Activated T-helper 1 cell treated with anti-CD3 and anti-CD28 coated beads, Interleukin-12 subunit alpha, Interleukin-12 subunit beta, Interleukin-2, Interleukin-4 antibody, amounts not matched to agents 30 ng/mL and 10 ng/mL and 1 ng/mL, durations not matched to agents 14 hours and 24 hours and 36 hours (primary cell): ENCODE measurements at regions of chr2 and their contacts with region 1.

Region 1: DNA sequence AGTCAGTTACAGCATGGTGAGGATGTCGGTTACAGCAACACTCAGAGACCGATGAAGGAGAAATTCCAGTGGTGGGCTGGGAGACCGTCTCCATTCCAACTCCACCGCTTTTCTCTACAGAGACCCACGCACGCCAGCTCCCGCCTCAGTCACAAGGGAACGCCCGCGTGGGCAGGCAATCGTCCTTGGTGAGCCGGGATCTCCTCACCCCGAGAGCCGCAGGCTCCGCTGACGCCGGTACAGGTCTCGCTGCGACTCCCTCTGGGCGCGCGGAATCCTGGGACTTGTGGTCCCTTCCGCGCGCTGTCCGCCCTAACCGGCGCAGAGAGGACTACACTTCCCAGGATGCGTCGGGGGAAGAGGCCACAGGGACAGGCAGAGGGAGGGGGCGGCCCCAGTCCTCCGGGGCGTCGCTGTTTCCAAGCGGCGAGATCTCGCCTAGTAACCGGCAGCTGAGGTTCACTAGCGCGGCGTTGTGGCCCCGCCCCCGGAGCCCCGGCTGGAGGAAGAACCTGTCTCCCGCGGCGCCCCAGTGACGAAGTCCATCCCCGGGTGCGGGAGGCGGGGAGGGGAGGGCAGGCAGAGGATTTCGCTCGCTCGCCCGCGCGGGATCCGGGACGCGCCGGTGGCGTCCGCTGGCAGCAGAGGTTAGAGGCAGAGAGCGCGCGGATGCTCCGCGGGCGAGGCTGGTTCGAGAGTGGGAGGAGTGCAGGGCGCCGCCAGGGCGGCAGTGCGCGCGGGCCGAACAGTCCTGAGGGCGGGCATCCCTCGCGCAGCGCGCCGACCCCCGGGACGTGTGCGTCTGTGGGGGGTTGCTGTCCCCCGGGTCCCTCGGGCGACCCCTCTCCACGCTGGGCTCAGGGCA is at the start of gene EML6:
- DNase-seq: peak; percentile 99
- H3K4me3 Mint-ChIP-seq: peak within 1 kb of the TSS; percentile 87
- H3K27ac Mint-ChIP-seq: peak within 1 kb of the TSS; percentile 49
- H3K4me1 Mint-ChIP-seq: peaks cover 14% of the 10 kb centered on the region
- H3K27me3 Mint-ChIP-seq: peaks cover 71% of the 10 kb centered on the region
- total RNA-seq, gene EML6: 0.37 and 0.44 TPM in 2 replicates

Region 2: DNA sequence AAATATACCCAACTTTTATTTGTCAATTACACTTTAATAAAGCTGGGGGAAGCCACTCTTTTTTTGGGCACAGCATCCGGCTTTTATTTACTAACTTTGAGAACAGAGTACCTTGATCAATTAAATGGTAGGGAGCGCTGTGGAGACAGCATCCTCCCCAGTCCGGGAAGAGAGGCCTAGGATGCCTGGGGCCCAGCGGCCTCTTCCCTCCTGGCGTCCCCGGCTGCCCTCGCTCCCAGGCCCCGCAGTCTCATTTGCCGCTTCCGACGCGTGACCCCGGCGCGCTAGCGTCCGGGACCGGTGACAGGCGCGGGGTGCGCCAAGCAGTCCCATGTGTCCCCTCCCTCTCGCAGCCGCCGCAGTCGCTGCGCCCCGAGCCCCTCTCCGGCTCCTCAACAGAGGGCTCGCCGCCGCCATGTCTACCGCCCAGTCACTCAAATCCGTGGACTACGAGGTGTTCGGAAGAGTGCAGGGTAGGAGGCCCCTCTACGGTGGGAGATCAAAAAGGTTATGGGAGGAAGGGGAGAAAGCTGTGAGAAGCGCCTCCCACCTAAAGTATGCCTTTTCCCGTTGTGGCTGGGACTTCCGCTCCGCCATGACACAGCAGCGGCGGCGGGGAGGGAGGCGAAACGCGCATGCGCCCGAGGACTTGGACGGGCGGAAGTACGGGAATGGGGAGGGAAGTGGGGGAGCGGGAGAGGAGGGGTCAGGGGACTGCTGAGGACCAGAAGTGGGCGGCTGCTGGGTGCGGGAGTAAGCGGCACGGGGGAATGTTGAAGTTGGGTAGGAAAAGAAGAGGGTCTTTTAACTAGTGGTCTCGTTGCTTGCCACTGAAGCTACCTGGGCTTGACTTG is 607.9 kb before region 1 on chr2 and contains the start of gene ACYP2:
- intact Hi-C with region 1: loop called (anchors 1 kb)
- DNase-seq: peak; percentile 88
- H3K4me3 Mint-ChIP-seq: peak within 1 kb of the TSS; percentile 92
- H3K27ac Mint-ChIP-seq: peak within 1 kb of the TSS; percentile 97
- H3K4me1 Mint-ChIP-seq: peaks cover 14% of the 10 kb centered on the region
- H3K27me3 Mint-ChIP-seq: peaks cover 7% of the 10 kb centered on the region
- total RNA-seq, gene ACYP2: 5.2 and 5.9 TPM in 2 replicates

Region 3: GRCh38 chr2:54570925-54571694 is 152.3 kb before region 1 on chr2:
- intact Hi-C with region 1: loop called (anchors 5 kb)
- DNase-seq: peak; percentile 84
- H3K4me3 Mint-ChIP-seq: peak overlapping the region; percentile 70
- H3K27ac Mint-ChIP-seq: peak overlapping the region; percentile 92
- H3K4me1 Mint-ChIP-seq: peaks cover 91% of the 10 kb centered on the region
- H3K27me3 Mint-ChIP-seq: peaks cover 2% of the 10 kb centered on the region

Region 4: GRCh38 chr2:54763636-54764291 is 40.4 kb after region 1 on chr2:
- intact Hi-C with region 1: loop called (anchors 2 kb)
- DNase-seq: no peak
- H3K4me3 Mint-ChIP-seq: no peak overlapping the region
- H3K27ac Mint-ChIP-seq: no peak overlapping the region
- H3K4me1 Mint-ChIP-seq: peaks cover 11% of the 10 kb centered on the region
- H3K27me3 Mint-ChIP-seq: peaks cover 6% of the 10 kb centered on the region

Region 5: DNA sequence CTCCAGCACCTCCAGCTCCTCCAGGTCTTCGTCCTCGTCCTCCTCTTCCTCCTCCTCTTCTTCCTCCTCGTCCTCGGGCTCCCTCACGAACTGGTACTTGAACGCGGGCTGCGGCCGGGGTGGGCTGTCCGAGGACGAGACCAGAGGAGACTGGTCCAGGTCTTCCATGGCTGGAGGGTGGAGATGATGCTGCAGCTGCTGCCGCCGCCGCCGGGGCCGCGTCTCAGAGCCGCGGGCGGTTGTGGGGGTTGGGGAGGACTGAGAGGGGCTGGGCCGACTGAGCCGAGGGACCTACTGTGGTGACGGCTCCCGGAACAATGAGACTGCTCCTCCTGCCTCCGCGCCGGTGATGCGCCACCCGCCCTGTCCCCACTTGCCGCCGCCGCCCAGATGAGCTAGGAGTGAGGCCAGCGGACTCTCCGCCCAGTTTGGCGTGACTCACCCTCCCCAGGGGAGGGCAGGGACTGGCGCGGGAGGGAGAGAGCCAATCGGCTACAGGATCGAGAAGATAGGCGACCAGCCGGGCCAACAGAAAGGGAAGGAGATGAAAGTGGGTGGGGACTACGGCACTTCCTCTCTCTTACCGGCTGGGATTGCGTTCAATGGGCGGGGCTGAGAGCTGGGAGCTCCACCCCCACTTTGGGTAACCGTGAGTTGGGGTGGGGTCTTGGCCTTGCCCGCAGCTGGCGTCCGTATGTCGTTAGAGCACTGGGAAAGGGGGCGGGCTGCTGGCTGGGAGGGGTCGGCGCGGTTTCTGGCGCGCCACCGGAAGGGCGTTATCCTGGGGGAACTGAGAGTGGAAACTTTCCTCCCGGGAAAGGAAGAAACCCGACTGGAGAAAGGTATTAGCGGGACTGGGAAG is 327.0 kb after region 1 on chr2 and contains the start of gene RTN4:
- intact Hi-C with region 1: loop called (anchors 1 kb)
- DNase-seq: peak; percentile 99
- H3K4me3 Mint-ChIP-seq: peak within 1 kb of the TSS; percentile 98
- H3K27ac Mint-ChIP-seq: peak within 1 kb of the TSS; percentile 98
- H3K4me1 Mint-ChIP-seq: peaks cover 69% of the 10 kb centered on the region
- H3K27me3 Mint-ChIP-seq: no peaks in the 10 kb centered on the region
- total RNA-seq, gene RTN4: 81.2 and 83.0 TPM in 2 replicates

Region 6: DNA sequence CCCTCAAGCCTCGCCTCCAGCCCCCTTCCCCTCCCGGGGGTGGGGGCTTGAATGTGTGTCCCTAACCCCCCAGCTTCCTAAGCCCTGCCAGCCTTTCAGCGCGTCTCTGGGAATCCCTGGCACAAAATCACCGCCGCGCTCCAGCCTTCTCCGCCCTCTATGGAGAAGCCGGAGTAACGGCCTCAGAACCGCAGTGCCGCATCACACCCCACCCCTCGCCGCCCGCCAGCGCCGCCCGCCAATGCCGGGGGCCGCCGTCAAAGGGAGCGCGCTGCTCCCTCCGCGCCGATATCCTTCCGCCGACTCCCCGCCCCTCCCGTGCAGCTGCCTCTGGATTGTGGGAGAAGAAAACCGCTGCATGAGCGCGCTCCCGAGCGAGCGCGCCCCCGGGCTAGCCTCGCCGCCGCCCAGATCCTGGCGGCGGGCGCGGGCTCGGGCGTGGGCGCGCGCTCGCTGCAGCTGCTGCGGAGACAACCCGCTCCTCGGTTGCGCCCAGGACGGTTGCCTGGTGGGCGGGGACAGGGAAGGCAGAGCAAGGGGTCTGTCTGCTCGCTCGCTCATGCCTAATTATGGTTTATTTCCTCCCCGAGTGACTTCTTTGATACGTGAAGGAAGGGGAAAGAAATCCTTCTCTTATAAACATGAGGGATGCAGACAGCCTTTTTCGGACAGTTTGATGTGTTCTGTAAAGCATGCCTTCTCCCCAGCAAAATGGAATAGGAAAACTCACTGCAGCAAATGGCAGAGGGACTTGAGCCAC is 696.5 kb after region 1 on chr2 and contains the start of gene CCDC88A:
- intact Hi-C with region 1: loop called (anchors 5 kb)
- DNase-seq: peak; percentile 78
- H3K4me3 Mint-ChIP-seq: peak within 1 kb of the TSS; percentile 89
- H3K27ac Mint-ChIP-seq: peak within 1 kb of the TSS; percentile 50
- H3K4me1 Mint-ChIP-seq: peaks cover 23% of the 10 kb centered on the region
- H3K27me3 Mint-ChIP-seq: peaks cover 25% of the 10 kb centered on the region
- total RNA-seq, gene CCDC88A: 6.4 and 8.4 TPM in 2 replicates